ENCODE measurements at regions of chr2 and their contacts with region 1.

Region 1: DNA sequence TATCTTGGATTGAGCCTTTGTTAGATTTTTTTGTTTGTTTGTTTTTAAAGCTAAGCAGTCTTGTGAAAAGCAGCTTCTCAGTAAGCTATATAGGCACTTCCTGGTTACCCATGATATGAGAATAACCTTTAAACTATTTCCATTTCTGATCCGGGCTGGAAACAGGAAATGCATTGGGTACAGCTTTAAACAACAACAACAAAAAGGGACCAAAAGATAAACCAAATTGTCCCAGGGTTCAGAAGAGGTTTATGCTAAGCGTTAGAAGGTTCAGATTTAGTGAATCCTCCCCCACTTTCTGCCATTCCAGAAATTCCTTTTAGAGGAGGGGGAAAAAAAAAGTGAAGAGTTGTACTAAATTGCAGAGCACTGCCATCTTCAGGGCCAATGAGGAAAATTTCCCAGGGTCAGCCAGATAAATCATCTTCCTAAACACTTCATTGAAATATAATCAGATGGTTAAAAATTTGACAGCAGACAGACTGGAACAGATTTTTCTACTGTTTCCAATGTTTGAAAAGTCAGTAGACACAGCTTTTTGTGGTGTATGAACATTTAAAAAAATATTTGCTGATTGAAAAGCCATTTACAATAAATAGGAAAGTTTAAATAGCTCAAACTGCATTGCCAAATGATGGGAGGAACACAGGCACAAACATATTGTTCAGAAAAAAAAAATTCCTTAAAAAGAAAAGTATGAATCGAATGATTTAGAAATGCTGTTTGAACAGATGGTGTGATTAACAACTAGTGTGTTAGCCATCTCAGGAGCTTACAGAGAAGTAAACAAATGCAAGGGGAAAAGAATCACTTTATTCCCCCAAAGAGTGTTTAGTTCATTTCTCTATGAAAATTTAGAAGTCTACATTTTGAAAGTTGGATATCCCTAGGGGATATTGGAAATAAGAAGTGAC is 189.9 kb upstream of the TANK start:
- DNase-seq: peak; percentile 34
- ATAC-seq: peak; percentile 60

Region 2: DNA sequence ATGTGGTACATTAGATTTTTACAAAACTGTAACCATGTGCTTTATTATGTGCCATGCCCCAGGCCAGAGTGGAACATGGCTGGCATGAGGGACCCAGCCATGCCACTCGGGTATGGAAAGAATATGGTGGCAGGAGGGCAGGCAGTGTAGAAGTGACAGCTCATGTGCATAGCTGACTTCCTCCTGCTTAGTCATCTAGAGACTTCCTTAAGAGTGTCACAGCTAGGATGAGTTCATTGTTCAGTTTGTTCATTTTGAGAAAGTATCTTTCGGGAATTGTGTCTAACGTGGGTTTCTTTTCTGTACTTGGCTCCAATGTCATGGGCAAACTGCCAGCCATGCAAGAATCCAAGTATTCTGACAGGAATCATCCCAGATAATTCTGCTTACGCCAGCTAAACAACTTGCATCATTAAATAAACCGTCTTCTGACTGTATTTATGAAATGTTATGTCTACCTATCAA is 675.9 kb before region 1 on chr2:
- intact Hi-C with region 1: loop called (anchors 10 kb)
- DNase-seq: peak; percentile 72
- ATAC-seq: peak; percentile 76

Region 3: GRCh38 chr2:160666154-160667060 is 303.9 kb before region 1 on chr2:
- intact Hi-C with region 1: loop called (anchors 10 kb)
- DNase-seq: no peak
- ATAC-seq: peak; percentile 98

Region 4: GRCh38 chr2:160803881-160804280 is 166.4 kb before region 1 on chr2:
- intact Hi-C with region 1: no loop called
- DNase-seq: no peak
- ATAC-seq: no peak

Region 5: GRCh38 chr2:160994141-160995002 is 24.1 kb after region 1 on chr2:
- intact Hi-C with region 1: no loop called
- DNase-seq: no peak
- ATAC-seq: peak; percentile 87